ENCODE measurements at regions of chr12 and their contacts with region 1.

Region 1: GRCh38 chr12:121649819-121650353 is 19.6 kb downstream of the MORN3 start:
- DNase-seq: peak; percentile 96 to 99 (median 99)
- H3K4me3 ChIP-seq: no peak overlapping the region
- H3K27ac ChIP-seq: no peak overlapping the region
- H3K4me1 ChIP-seq: peaks cover 5 to 55% (median 30%) of the 10 kb centered on the region in 4 experiments
- H3K27me3 ChIP-seq: no peaks in the 10 kb centered on the region

Region 2: GRCh38 chr12:121632069-121632970 is 17.6 kb before region 1 on chr12:
- CTCF ChIA-PET with region 1: interaction called, 56 read pairs
- POLR2A ChIA-PET with region 1: interaction called, 11 read pairs
- DNase-seq: no peak
- H3K4me3 ChIP-seq: peak overlapping the region in 2 of 7 experiments; percentile 13 to 39
- H3K27ac ChIP-seq: peak overlapping the region; percentile 47 to 66
- H3K4me1 ChIP-seq: peaks cover 22 to 86% (median 73%) of the 10 kb centered on the region in 4 experiments
- H3K27me3 ChIP-seq: no peaks in the 10 kb centered on the region

Region 3: DNA sequence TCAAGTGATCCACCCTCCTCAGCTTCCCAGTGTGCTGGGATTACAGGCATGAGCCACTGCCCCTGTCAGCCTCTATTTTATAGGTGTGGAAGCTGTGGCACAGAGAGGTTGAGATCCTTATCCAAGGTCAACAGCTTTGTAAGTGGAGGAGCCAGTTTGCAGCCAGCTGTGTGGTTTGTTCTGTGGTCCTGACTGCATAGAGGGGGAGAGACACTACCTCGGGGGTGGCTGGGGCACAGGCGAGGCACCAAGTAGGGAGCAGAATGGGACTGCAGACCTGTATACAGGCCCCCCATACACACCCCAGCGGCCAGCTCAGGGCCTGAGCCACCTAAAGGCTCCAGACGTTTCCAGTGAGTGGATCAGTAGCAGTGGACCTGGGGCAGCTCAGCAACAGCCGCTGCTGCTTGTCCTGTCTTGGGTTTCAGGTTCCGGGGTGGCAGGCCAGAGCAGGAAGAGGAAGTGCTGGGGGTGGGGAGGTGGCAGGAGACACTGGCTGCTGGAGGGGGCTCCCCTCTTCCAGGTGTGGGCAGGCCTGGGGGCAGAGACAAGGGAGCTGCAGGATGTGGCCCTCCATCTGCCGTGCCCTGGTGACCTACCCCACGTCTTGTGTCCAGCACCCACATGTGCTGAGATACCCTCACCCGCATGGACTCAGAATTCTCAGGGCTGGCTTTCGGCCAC is 12.5 kb before region 1 on chr12:
- CTCF ChIA-PET with region 1: interaction called, 56 read pairs
- POLR2A ChIA-PET with region 1: interaction called, 11 read pairs
- DNase-seq: peak in 2 of 3 donors; percentile 24 to 55
- H3K4me3 ChIP-seq: peak overlapping the region in 3 of 7 experiments; percentile 4 to 50 (median 9)
- H3K27ac ChIP-seq: peak overlapping the region; percentile 40 to 71
- H3K4me1 ChIP-seq: peaks cover 2 to 55% (median 35%) of the 10 kb centered on the region in 4 experiments
- H3K27me3 ChIP-seq: no peaks in the 10 kb centered on the region